ENCODE measurements at regions of chr7 and their contacts with region 1.

Region 1: GRCh38 chr7:46839651-46840050 is 742.3 kb downstream of the TNS3 start:
- DNase-seq: no peak
- ATAC-seq: no peak
- H3K4me3 ChIP-seq: no peak overlapping the region
- H3K27ac ChIP-seq: no peak overlapping the region
- H3K4me1 ChIP-seq: no peaks in the 10 kb centered on the region
- H3K27me3 ChIP-seq: no peaks in the 10 kb centered on the region
- CTCF ChIP-seq: no peak

Region 2: GRCh38 chr7:46282155-46282554 is 557.5 kb before region 1 on chr7:
- intact Hi-C with region 1: no loop called
- DNase-seq: no peak
- ATAC-seq: peak in 1 of 4 donors; percentile 58
- H3K4me3 ChIP-seq: no peak overlapping the region
- H3K27ac ChIP-seq: no peak overlapping the region
- H3K4me1 ChIP-seq: no peaks in the 10 kb centered on the region
- H3K27me3 ChIP-seq: no peaks in the 10 kb centered on the region
- CTCF ChIP-seq: no peak

Region 3: GRCh38 chr7:46859963-46860475 is 20.4 kb after region 1 on chr7:
- intact Hi-C with region 1: loop called in 1 of 3 experiments (anchors 2 kb)
- DNase-seq: no peak
- ATAC-seq: no peak
- H3K4me3 ChIP-seq: no peak overlapping the region
- H3K27ac ChIP-seq: no peak overlapping the region
- H3K4me1 ChIP-seq: no peaks in the 10 kb centered on the region
- H3K27me3 ChIP-seq: no peaks in the 10 kb centered on the region
- CTCF ChIP-seq: no peak

Region 4: GRCh38 chr7:47066971-47067614 is 227.4 kb after region 1 on chr7:
- intact Hi-C with region 1: no loop called
- DNase-seq: no peak
- ATAC-seq: no peak
- H3K4me3 ChIP-seq: no peak overlapping the region
- H3K27ac ChIP-seq: no peak overlapping the region
- H3K4me1 ChIP-seq: no peaks in the 10 kb centered on the region
- H3K27me3 ChIP-seq: no peaks in the 10 kb centered on the region
- CTCF ChIP-seq: no peak

Region 5: GRCh38 chr7:47195641-47196040 is 356.0 kb after region 1 on chr7:
- intact Hi-C with region 1: no loop called
- DNase-seq: no peak
- ATAC-seq: peak in 1 of 4 donors; percentile 6
- H3K4me3 ChIP-seq: no peak overlapping the region
- H3K27ac ChIP-seq: no peak overlapping the region
- H3K4me1 ChIP-seq: no peaks in the 10 kb centered on the region
- H3K27me3 ChIP-seq: no peaks in the 10 kb centered on the region
- CTCF ChIP-seq: peak in 1 of 4 donors; percentile 2

Measured in pancreas (tissue), 10 donors.